ENCODE measurements at regions of chr19 and their contacts with region 1.

Region 1: DNA sequence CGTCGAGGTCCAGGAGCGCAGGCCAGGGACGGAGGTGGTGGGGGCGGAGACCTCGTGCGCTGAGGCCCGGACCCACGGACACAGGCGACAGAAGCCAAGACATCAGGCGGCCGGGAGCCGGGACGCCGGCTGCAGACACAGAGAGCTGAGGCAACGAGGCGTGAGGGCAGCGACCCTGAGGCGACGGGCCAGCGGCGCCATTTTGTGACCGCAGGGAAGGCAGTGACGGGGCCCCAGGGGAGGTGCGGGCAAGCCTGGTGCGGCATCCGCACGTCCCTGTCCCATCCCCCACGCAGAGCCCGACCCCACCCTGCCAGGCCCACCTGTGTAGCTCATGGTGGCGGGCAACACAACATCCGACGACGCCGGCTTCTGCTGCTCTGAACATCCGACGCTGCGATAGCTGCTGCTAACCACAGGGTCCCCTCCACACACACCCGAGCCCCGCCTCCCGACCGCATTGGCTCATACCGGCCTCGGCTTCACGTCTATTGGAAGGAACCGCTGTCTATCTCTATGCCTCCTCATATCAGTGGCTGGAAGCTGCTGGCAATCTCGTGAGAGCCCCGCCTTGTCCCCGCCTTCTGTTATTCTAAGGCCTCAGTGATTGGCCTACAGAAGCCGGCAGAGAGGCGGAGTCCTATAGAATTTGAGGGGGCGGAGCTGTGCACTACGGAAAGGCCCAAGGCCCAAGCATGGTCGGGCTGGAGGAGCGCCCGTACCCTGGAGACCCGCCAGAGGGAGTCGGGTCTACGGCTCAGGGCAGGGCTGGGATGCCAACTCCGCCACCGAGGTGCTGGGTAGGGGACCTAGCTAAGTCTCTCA is at the start of gene AKAP8L:
- DNase-seq: peak; percentile 100
- H3K4me3 ChIP-seq: peak within 1 kb of the TSS; percentile 72 to 85 (median 85)
- H3K27ac ChIP-seq: peak within 1 kb of the TSS; percentile 62
- H3K4me1 ChIP-seq: peaks cover 14% of the 10 kb centered on the region
- H3K27me3 ChIP-seq: no peaks in the 10 kb centered on the region
- CTCF ChIP-seq: peak; percentile 76 to 90
- POLR2A ChIP-seq: peak; percentile 93
- total RNA-seq, gene AKAP8L: 95.4 and 99.6 TPM in 2 replicates

Region 2: GRCh38 chr19:15091901-15092753 is 326.7 kb before region 1 on chr19:
- CTCF ChIA-PET with region 1: interaction called, 11 read pairs
- POLR2A ChIA-PET with region 1: no interaction called
- dilution Hi-C with region 1: no loop called
- intact Hi-C with region 1: no loop called
- DNase-seq: peak; percentile 58
- H3K4me3 ChIP-seq: no peak overlapping the region
- H3K27ac ChIP-seq: no peak overlapping the region
- H3K4me1 ChIP-seq: no peaks in the 10 kb centered on the region
- H3K27me3 ChIP-seq: no peaks in the 10 kb centered on the region
- CTCF ChIP-seq: peak; percentile 55 to 60
- POLR2A ChIP-seq: no peak

Region 3: GRCh38 chr19:15177269-15178116 is 241.3 kb before region 1 on chr19:
- CTCF ChIA-PET with region 1: interaction called, 9 read pairs
- POLR2A ChIA-PET with region 1: no interaction called
- dilution Hi-C with region 1: no loop called
- intact Hi-C with region 1: loop called (anchors 1 kb)
- DNase-seq: peak; percentile 78
- H3K4me3 ChIP-seq: peak overlapping the region in 1 of 3 experiments; percentile 13
- H3K27ac ChIP-seq: no peak overlapping the region
- H3K4me1 ChIP-seq: no peaks in the 10 kb centered on the region
- H3K27me3 ChIP-seq: no peaks in the 10 kb centered on the region
- CTCF ChIP-seq: peak; percentile 93 to 97
- POLR2A ChIP-seq: no peak

Region 4: DNA sequence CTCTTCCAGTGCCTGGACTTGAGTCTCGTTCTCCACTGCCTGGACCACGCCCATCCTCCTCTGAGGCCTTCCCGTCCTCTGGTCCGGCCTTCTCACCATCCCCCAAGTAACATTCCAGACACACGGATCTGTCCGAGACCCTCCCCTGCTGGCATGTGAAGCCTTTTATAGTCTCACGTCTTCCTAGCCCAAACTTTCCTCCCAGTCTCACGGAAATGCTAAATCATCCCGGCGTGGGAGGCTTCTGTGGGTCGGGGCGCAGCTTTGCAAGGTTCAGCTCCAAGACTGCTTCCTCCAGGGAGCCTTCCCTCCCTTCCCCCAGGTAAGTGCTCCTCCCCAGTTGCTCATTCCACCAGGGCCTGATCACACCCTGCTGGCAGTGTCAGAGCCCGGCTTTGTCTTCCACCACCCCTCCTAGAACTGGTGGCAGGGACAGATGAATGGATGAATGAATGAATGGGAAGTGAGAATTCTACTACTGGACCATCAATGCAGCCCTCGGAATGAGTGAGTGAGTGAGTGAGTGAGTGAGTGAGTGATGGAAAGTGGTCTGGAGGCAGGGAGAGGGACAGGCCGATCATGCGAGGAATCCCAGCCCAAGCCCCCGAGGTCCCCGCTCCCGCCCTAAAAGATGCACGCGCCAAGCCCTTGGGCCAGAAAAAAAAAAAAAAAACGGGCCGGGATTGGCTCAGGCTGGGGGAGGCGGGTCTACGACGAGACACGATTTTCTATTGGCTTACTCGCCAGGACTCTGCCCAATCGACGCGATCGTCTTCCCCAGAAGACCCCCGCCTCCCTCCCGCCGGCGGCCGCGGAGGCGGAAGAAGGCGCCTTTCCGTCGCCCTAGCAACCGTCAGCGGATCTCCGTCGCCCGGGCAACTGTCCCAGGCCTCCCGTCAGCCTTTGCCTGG is 195.8 kb before region 1 on chr19:
- CTCF ChIA-PET with region 1: no interaction called
- POLR2A ChIA-PET with region 1: no interaction called
- dilution Hi-C with region 1: no loop called
- intact Hi-C with region 1: no loop called
- DNase-seq: peak; percentile 93
- H3K4me3 ChIP-seq: peak overlapping the region; percentile 43 to 52 (median 44)
- H3K27ac ChIP-seq: no peak overlapping the region
- H3K4me1 ChIP-seq: peaks cover 9% of the 10 kb centered on the region
- H3K27me3 ChIP-seq: no peaks in the 10 kb centered on the region
- CTCF ChIP-seq: no peak
- POLR2A ChIP-seq: no peak

Region 5: GRCh38 chr19:15379083-15379995 is 39.5 kb before region 1 on chr19 and contains the start of gene AKAP8:
- CTCF ChIA-PET with region 1: interaction called, 32 read pairs
- POLR2A ChIA-PET with region 1: interaction called, 12 read pairs
- dilution Hi-C with region 1: no loop called
- intact Hi-C with region 1: loop called (anchors 1 kb)
- DNase-seq: peak; percentile 99
- H3K4me3 ChIP-seq: peak within 1 kb of the TSS; percentile 82 to 90 (median 85)
- H3K27ac ChIP-seq: peak within 1 kb of the TSS; percentile 85
- H3K4me1 ChIP-seq: peaks cover 20% of the 10 kb centered on the region
- H3K27me3 ChIP-seq: no peaks in the 10 kb centered on the region
- CTCF ChIP-seq: no peak
- POLR2A ChIP-seq: peak; percentile 85
- total RNA-seq, gene AKAP8: 42.6 and 44.1 TPM in 2 replicates

Region 6: DNA sequence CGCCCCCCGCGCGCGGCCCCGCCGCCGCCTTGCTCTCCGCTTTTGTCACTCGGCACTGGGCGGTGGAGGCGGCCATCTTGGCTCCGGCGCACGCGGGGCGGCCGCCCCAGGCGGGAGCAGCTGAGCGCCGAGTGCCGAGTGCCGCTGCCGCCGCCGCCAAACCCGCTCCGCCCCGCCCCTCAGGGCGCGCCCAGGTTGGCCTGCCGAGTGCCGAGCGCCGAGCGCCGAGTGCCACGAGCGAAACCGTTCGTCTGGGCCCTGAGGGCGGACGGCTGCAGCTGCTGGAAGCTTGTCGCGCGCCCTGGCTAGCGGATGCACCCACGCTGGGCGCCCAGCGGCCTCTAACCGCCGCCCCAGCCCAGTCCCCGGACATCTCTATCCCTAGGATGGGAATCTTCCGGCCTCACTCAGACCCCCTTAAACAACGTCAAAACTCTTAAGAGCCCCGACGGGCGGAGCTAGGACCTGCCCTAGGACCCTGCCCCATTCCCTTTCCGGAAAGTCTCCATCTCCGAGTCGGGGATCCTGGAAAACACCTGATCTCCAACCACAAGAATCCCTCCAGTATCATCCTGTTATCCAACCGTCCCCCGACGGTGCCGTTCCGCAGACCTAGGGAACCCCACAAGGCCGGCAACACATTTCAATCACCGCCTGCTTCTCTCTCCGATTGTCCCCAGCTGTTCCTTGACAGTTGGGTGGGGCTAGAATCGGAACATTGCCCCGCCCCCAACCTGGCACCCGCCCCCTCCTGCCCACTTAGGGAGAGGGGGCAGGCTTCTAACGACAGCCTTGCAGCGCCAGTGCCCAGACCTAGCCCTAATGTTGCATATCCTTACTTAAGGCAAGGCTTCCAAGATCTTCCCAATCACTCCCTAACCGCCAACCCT is 14.1 kb after region 1 on chr19:
- CTCF ChIA-PET with region 1: interaction called, 24 read pairs
- POLR2A ChIA-PET with region 1: interaction called, 10 read pairs
- dilution Hi-C with region 1: no loop called
- intact Hi-C with region 1: loop called (anchors 1 kb)
- DNase-seq: peak; percentile 88
- H3K4me3 ChIP-seq: peak overlapping the region; percentile 52 to 77 (median 71)
- H3K27ac ChIP-seq: peak overlapping the region; percentile 25
- H3K4me1 ChIP-seq: peaks cover 12% of the 10 kb centered on the region
- H3K27me3 ChIP-seq: no peaks in the 10 kb centered on the region
- CTCF ChIP-seq: no peak
- POLR2A ChIP-seq: peak; percentile 75

Region 7: DNA sequence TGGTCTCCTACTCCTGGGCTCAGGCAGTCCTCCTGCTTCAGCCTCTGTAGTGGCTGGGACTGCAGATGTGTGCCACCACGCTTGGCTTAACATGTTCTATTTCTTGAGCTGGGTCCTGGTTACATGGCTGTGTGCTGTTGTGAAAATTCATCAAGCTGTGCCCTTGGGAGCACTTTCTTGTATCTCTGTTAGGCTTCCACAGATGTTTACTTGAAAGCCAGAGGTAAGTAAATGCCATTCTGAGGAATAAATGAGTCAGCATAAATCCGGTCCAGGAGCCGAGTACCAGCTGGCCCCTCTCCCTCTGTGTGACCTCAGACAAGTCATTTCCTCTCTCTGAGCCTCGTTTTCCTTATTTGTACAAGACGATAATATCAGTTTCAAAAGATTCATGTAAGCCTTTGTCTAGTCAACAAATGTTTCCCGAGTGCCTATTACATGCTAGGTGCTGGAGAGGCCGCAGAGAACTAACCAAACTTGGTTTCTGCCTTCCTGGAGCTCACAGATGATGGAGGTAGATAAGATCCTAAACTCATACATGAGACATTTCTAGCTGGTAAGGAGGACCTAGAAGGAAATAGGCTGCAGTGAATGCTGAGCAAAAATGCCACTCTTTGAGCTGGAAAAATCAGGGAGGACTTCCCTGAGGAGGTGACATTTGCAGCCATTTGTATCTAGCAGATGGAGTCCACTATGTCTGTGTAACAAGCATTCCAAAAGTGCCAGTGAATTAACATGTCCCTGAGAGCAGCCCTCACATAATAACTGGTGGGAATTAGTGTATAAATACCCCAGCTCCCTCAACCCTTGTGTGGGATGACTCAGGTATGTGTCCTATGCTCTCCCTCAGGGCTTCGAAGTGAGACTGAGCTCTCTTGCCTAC is 48.3 kb after region 1 on chr19:
- CTCF ChIA-PET with region 1: interaction called, 10 read pairs
- POLR2A ChIA-PET with region 1: interaction called, 4 read pairs
- dilution Hi-C with region 1: no loop called
- intact Hi-C with region 1: loop called (anchors 1 kb)
- DNase-seq: peak; percentile 99
- H3K4me3 ChIP-seq: no peak overlapping the region
- H3K27ac ChIP-seq: peak overlapping the region; percentile 41
- H3K4me1 ChIP-seq: peaks cover 39% of the 10 kb centered on the region
- H3K27me3 ChIP-seq: peaks cover 0 to 2% of the 10 kb centered on the region in 2 experiments
- CTCF ChIP-seq: no peak
- POLR2A ChIP-seq: peak; percentile 45